ENCODE measurements at regions of chr17 and their contacts with region 1.

Region 1: DNA sequence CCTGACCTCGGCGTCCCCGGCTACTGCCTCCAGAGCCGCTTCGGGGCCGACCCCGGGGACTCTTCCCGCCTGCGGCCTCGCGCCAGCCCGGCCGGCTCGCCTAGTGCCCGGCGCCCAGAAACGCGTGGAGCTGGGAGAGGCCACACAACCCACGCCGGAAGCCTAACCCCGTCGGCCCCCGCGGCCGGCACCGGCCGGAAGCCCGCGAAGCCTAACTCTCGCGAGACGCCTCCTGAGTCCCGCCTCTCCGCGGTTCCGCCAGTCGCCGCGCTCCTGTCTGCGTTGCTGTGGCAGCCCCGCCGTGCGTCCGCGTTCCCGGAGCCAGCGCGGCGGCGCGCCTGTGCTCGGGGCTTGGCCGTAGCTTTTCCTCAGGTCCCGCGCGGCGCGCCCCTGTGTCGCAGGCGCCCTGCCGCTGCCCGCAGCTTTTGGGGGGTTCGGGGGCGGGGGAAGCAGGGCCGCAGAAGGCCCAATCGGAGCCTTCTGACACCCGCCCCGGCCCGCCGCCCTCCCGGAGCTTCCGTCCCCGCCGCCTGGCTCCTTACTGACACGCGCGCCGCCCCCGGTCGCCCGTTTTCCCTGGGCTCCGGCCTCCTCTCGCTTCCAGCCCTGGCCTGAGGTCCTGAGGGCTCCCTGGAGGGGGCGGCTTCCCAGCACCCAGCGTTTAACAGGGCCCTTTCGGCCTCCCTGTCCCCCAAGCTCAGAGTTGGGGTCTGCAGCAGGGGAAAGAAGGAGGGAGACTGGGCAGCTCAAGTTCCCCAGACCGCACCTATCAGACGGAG is 21.7 kb downstream of the NPTX1 start:
- DNase-seq: peak; percentile 90 to 98 (median 95)
- ATAC-seq: peak; percentile 95
- H3K4me3 ChIP-seq: peak overlapping the region; percentile 68
- H3K4me3 Mint-ChIP-seq: peak overlapping the region; percentile 90
- H3K27ac ChIP-seq: peak overlapping the region; percentile 93
- H3K27ac Mint-ChIP-seq: peak overlapping the region; percentile 94
- H3K4me1 ChIP-seq: peaks cover 17% of the 10 kb centered on the region
- H3K4me1 Mint-ChIP-seq: peaks cover 15% of the 10 kb centered on the region
- H3K27me3 ChIP-seq: peaks cover 0 to 21% of the 10 kb centered on the region in 2 experiments
- H3K27me3 Mint-ChIP-seq: peaks cover 23% of the 10 kb centered on the region
- CTCF ChIP-seq: no peak

Region 2: DNA sequence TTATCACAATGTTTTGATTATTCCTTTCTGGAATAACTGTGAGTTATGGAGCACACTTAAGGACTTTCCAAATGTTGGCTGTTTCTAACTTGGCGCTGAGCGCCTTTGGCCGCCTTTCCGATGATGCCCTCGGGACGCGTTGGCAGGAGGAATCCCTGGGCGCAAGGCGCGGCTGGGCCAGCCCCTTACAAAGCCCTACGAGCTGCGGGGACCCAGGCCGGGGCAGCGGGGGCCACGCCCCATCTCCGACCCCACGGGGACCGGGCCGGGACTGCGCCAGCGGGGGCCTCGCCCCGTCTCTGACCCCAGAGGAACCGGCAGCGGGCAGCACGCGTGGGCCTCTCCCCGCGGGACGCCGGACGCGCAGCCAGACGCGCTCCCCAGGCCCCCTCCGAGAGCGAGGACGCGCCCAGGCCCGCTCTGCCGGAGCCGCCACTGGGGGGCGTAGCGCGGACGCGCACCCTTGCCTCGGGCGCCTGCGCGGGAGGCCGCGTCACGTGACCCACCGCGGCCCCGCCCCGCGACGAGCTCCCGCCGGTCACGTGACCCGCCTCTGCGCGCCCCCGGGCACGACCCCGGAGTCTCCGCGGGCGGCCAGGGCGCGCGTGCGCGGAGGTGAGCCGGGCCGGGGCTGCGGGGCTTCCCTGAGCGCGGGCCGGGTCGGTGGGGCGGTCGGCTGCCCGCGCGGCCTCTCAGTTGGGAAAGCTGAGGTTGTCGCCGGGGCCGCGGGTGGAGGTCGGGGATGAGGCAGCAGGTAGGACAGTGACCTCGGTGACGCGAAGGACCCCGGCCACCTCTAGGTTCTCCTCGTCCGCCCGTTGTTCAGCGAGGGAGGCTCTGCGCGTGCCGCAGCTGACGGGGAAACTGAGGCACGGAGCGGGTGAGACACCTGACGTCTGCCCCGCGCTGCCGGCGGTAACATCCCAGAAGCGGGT is 353.5 kb before region 1 on chr17 and contains the start of gene GAA:
- CTCF ChIA-PET with region 1: no interaction called
- POLR2A ChIA-PET with region 1: interaction called, 8 read pairs
- intact Hi-C with region 1: loop called in 1 of 2 experiments (anchors 5 kb)
- DNase-seq: peak; percentile 71 to 95 (median 86)
- ATAC-seq: peak; percentile 83
- H3K4me3 ChIP-seq: peak within 1 kb of the TSS; percentile 99
- H3K4me3 Mint-ChIP-seq: peak within 1 kb of the TSS; percentile 93
- H3K27ac ChIP-seq: peak within 1 kb of the TSS in 1 of 2 donors; percentile 46
- H3K27ac Mint-ChIP-seq: peak within 1 kb of the TSS; percentile 84
- H3K4me1 ChIP-seq: peaks cover 29% of the 10 kb centered on the region
- H3K4me1 Mint-ChIP-seq: peaks cover 35% of the 10 kb centered on the region
- H3K27me3 ChIP-seq: no peaks in the 10 kb centered on the region
- H3K27me3 Mint-ChIP-seq: no peaks in the 10 kb centered on the region
- CTCF ChIP-seq: peak; percentile 64
- total RNA-seq, gene GAA: 22.2 to 22.4 TPM

Region 3: DNA sequence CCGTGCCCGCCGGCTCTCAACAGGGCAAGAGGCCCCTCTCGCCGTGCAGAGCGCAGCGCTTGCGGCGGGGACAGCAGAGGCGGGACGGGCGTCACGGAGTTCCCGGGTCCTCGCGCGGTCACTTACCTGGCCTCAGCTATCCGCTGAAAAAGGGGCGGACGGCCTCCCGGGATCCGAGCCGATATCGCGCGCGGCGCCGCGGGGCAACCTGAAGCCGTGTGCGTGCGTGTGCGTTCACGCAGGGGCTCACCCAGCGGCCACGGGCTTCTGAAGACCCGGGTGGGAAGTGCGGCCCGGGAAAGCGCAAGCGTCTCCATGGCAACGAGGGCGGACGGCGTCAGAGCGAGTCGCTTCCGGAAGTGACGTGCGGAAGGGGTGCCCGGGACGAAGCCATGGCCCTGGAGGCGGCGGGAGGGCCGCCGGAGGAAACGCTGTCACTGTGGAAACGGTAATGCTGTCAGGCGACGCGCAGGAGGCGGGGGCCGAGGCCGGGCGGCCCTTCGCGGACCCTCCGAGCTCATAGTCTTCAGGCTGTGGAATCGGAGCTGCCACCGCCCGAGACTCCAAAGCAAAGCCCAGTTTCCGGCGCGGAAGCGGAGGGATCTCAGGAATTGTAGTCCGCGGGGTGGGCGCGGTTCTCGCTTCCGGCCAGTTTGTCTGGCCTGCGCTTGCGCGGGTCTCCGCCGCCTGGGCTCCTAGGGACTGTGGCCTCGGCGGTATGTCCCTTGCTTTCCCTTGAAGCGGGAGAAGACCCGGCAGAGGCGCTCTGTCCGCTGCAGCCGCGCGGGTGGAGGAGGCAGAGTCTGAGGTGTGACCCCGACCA is 39.7 kb before region 1 on chr17 and contains the start of gene ENDOV:
- CTCF ChIA-PET with region 1: no interaction called
- POLR2A ChIA-PET with region 1: interaction called, 13 read pairs
- intact Hi-C with region 1: loop called (anchors 1 to 2 kb)
- DNase-seq: peak; percentile 88 to 99 (median 92)
- ATAC-seq: peak; percentile 89
- H3K4me3 ChIP-seq: peak within 1 kb of the TSS; percentile 100
- H3K4me3 Mint-ChIP-seq: peak within 1 kb of the TSS; percentile 93
- H3K27ac ChIP-seq: peak within 1 kb of the TSS; percentile 46 to 79
- H3K27ac Mint-ChIP-seq: peak within 1 kb of the TSS; percentile 7
- H3K4me1 ChIP-seq: peaks cover 31% of the 10 kb centered on the region
- H3K4me1 Mint-ChIP-seq: peaks cover 34% of the 10 kb centered on the region
- H3K27me3 ChIP-seq: peaks cover 0 to 10% of the 10 kb centered on the region in 2 experiments
- H3K27me3 Mint-ChIP-seq: peaks cover 27% of the 10 kb centered on the region
- CTCF ChIP-seq: no peak
- total RNA-seq, gene ENDOV: 10.1 to 12.0 TPM

Region 4: GRCh38 chr17:80477647-80478478 is 23.1 kb after region 1 on chr17:
- CTCF ChIA-PET with region 1: no interaction called
- POLR2A ChIA-PET with region 1: interaction called, 15 read pairs
- intact Hi-C with region 1: no loop called
- DNase-seq: peak in 10 of 14 experiments; percentile 12 to 64 (median 34)
- ATAC-seq: peak; percentile 54
- H3K4me3 ChIP-seq: no peak overlapping the region
- H3K4me3 Mint-ChIP-seq: no peak overlapping the region
- H3K27ac ChIP-seq: no peak overlapping the region
- H3K27ac Mint-ChIP-seq: no peak overlapping the region
- H3K4me1 ChIP-seq: peaks cover 44% of the 10 kb centered on the region
- H3K4me1 Mint-ChIP-seq: peaks cover 15% of the 10 kb centered on the region
- H3K27me3 ChIP-seq: peaks cover 72 to 85% of the 10 kb centered on the region in 2 experiments
- H3K27me3 Mint-ChIP-seq: peaks cover 63% of the 10 kb centered on the region
- CTCF ChIP-seq: peak; percentile 35

Region 5: GRCh38 chr17:80498242-80498919 is 43.6 kb after region 1 on chr17:
- CTCF ChIA-PET with region 1: no interaction called
- POLR2A ChIA-PET with region 1: no interaction called
- intact Hi-C with region 1: no loop called
- DNase-seq: no peak
- ATAC-seq: no peak
- H3K4me3 ChIP-seq: no peak overlapping the region
- H3K4me3 Mint-ChIP-seq: no peak overlapping the region
- H3K27ac ChIP-seq: no peak overlapping the region
- H3K27ac Mint-ChIP-seq: no peak overlapping the region
- H3K4me1 ChIP-seq: peaks cover 9% of the 10 kb centered on the region
- H3K4me1 Mint-ChIP-seq: peaks cover 10% of the 10 kb centered on the region
- H3K27me3 ChIP-seq: peaks cover 0 to 11% of the 10 kb centered on the region in 2 experiments
- H3K27me3 Mint-ChIP-seq: peaks cover 24% of the 10 kb centered on the region
- CTCF ChIP-seq: no peak

Region 6: DNA sequence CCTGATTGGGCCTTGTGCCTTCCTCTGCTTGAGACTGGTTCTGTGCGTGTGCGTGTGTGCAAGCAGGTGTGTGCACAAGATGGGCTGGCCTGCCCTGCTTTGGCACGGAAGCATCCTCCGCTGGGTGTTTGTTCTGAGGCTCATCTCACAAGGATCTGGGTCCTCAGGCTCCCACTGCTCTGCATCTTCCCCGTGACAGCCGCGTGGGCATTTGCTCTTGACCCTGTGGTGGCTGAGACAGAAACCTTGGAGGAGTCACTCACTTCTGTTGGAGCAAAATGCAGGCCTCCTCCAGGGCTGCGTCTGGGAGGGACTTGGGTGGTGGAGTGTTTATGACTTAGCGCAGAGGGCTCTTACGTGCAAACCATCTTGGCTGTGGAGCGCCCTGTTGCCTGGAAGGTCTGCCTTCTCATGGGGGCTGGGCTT is 209.0 kb after region 1 on chr17:
- CTCF ChIA-PET with region 1: no interaction called
- POLR2A ChIA-PET with region 1: no interaction called
- intact Hi-C with region 1: loop called in 1 of 2 experiments (anchors 5 kb)
- DNase-seq: peak; percentile 19 to 82 (median 42)
- ATAC-seq: peak; percentile 69
- H3K4me3 ChIP-seq: no peak overlapping the region
- H3K4me3 Mint-ChIP-seq: peak overlapping the region; percentile 71
- H3K27ac ChIP-seq: peak overlapping the region; percentile 61 to 88
- H3K27ac Mint-ChIP-seq: peak overlapping the region; percentile 99
- H3K4me1 ChIP-seq: peaks cover 60% of the 10 kb centered on the region
- H3K4me1 Mint-ChIP-seq: peaks cover 81% of the 10 kb centered on the region
- H3K27me3 ChIP-seq: no peaks in the 10 kb centered on the region
- H3K27me3 Mint-ChIP-seq: no peaks in the 10 kb centered on the region
- CTCF ChIP-seq: no peak

Region 7: DNA sequence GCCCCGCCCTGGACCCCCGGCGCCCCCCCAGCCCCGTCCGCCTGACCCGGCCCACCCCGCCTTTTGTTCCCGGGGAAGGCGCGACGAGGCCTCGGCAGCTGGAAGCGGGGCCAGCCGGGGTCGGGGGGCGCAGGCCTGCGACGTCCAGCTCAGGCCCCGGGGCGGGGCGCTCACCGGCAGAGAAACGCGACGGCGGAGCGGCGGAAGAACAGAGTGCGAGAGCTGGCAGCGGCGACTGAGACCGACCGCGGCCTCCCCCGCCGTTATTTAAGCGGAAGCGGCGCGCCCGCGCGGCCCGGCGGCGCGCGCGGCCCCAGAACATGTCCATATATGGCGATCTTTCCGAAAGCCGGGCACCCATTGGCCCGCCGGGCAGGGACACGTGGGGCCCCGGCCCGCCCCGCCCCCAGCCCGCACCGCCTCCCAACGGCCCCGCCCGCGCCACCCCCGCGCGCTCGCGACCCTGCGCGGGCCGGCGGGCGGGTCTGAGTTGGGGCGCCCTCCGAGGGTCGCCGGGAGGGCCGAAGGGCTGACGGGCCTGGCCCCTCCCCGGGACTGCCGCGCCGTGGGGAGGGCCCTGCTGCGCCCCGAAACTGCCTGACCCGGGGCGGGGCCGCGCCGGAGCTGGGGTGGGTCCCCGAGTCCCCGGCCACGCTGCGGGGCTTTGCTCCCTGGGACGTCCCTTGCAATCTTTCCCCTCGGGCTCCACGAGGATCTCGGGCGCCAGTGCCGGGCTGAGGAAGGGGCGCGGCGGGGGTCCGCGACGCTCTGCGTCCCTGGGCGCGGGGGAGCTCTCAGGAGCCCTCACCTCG is 1058.0 kb after region 1 on chr17 and contains the start of gene ACTG1:
- CTCF ChIA-PET with region 1: no interaction called
- POLR2A ChIA-PET with region 1: interaction called, 3 read pairs
- intact Hi-C with region 1: loop called in 1 of 2 experiments (anchors 10 kb)
- DNase-seq: peak; percentile 84 to 96 (median 92)
- ATAC-seq: peak; percentile 66
- H3K4me3 ChIP-seq: peak within 1 kb of the TSS; percentile 98
- H3K4me3 Mint-ChIP-seq: peak within 1 kb of the TSS; percentile 99
- H3K27ac ChIP-seq: peak within 1 kb of the TSS; percentile 72 to 87
- H3K27ac Mint-ChIP-seq: peak within 1 kb of the TSS; percentile 90
- H3K4me1 ChIP-seq: peaks cover 72% of the 10 kb centered on the region
- H3K4me1 Mint-ChIP-seq: peaks cover 57% of the 10 kb centered on the region
- H3K27me3 ChIP-seq: no peaks in the 10 kb centered on the region
- H3K27me3 Mint-ChIP-seq: no peaks in the 10 kb centered on the region
- CTCF ChIP-seq: no peak
- total RNA-seq, gene ACTG1: 1,296 to 1,318 TPM